Activated B cell treated with CpG ODN at 0.5 μM for 24 hours (primary cell): ENCODE measurements at regions of chrX and their contacts with region 1.

Region 1: GRCh38 chrX:54439967-54440871 is at the start of gene TSR2:
- DNase-seq: peak; percentile 59
- ATAC-seq: peak; percentile 98
- H3K4me3 Mint-ChIP-seq: peak within 1 kb of the TSS; percentile 91
- H3K27ac Mint-ChIP-seq: peak within 1 kb of the TSS; percentile 76
- H3K4me1 Mint-ChIP-seq: peaks cover 29% of the 10 kb centered on the region
- H3K27me3 Mint-ChIP-seq: no peaks in the 10 kb centered on the region
- CTCF ChIP-seq: no peak
- total RNA-seq, gene TSR2: 35.9 and 42.4 TPM in 2 replicates

Region 2: GRCh38 chrX:54529552-54530357 is 89.5 kb after region 1 on chrX and contains the start of gene GNL3L:
- CTCF ChIA-PET with region 1: no interaction called
- POLR2A ChIA-PET with region 1: interaction called, 6 read pairs
- intact Hi-C with region 1: loop called (anchors 1 kb)
- DNase-seq: peak; percentile 66
- ATAC-seq: peak; percentile 83
- H3K4me3 Mint-ChIP-seq: peak within 1 kb of the TSS; percentile 94
- H3K27ac Mint-ChIP-seq: peak within 1 kb of the TSS; percentile 97
- H3K4me1 Mint-ChIP-seq: peaks cover 43% of the 10 kb centered on the region
- H3K27me3 Mint-ChIP-seq: no peaks in the 10 kb centered on the region
- CTCF ChIP-seq: no peak
- total RNA-seq, gene GNL3L: 67.1 and 70.5 TPM in 2 replicates

Region 3: GRCh38 chrX:54808605-54809483 is 368.6 kb after region 1 on chrX:
- CTCF ChIA-PET with region 1: no interaction called
- POLR2A ChIA-PET with region 1: no interaction called
- intact Hi-C with region 1: loop called (anchors 1 kb)
- DNase-seq: peak; percentile 73
- ATAC-seq: peak; percentile 96
- H3K4me3 Mint-ChIP-seq: peak overlapping the region; percentile 92
- H3K27ac Mint-ChIP-seq: peak overlapping the region; percentile 91
- H3K4me1 Mint-ChIP-seq: peaks cover 14% of the 10 kb centered on the region
- H3K27me3 Mint-ChIP-seq: no peaks in the 10 kb centered on the region
- CTCF ChIP-seq: no peak